Common myeloid progenitor, CD34-positive (primary cell): ENCODE measurements at regions of chr1 and their contacts with region 1.

Region 1: GRCh38 chr1:32992489-32993323 is 28.1 kb upstream of the RNF19B start:
- DNase-seq: peak; percentile 96 to 99 (median 99)
- H3K4me3 ChIP-seq: peak overlapping the region in 2 of 7 experiments; percentile 24 to 41
- H3K27ac ChIP-seq: peak overlapping the region; percentile 4 to 41
- H3K4me1 ChIP-seq: peaks cover 27 to 79% (median 57%) of the 10 kb centered on the region in 4 experiments
- H3K27me3 ChIP-seq: no peaks in the 10 kb centered on the region

Region 2: GRCh38 chr1:32964461-32965250 is 28.1 kb before region 1 on chr1 and contains the start of gene RNF19B:
- CTCF ChIA-PET with region 1: interaction called, 4 read pairs
- POLR2A ChIA-PET with region 1: interaction called, 28 read pairs
- DNase-seq: peak; percentile 94 to 97 (median 96)
- H3K4me3 ChIP-seq: peak within 1 kb of the TSS; percentile 59 to 89 (median 79)
- H3K27ac ChIP-seq: peak within 1 kb of the TSS in 1 of 2 experiments; percentile 73
- H3K4me1 ChIP-seq: peaks cover 7 to 30% (median 24%) of the 10 kb centered on the region in 4 experiments
- H3K27me3 ChIP-seq: no peaks in the 10 kb centered on the region

Region 3: DNA sequence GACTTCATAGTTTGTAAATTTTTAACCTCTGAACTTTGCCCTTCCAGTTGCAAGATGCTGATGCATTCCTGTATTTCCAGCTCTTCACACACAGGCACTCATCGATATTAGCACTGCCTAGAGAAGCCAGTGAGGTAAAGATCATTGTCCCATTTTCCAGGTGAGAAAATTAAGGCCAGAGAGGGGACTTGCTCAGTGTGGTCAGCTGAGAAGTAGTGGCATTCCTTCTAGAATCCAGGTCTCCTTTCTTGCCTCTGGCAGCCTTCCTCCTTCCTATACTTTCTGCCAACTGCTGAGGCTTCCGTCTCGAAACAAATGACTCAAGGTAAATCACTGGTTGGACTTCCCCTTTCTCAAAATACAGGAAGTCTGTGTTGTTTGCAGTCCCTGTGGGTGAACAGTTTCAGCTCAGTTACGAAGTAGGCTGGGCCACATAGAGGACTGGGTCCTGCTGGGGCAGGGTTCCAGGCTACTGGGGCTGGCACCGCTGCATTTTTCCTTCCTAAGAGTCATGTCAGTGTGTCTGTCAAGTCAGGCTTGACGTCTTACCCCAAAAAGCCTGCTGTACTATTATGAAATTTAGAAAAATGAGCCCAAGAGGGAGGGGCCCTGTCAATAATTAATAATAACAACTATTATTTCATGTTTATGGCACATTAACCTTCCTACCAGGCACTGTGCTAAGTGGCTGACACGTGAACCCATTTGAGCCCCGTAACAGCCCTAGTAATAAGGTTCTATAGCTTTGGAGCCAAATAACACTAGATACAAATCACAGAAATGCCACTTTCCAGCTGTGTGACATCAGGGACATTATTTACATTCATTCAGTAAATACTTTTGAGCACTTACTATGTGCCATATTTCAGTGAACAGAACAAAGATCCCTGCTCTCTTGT is 11.5 kb before region 1 on chr1:
- CTCF ChIA-PET with region 1: interaction called, 15 read pairs
- POLR2A ChIA-PET with region 1: interaction called, 14 read pairs
- DNase-seq: peak; percentile 84 to 96 (median 93)
- H3K4me3 ChIP-seq: peak overlapping the region in 6 of 7 experiments; percentile 8 to 55 (median 43)
- H3K27ac ChIP-seq: peak overlapping the region; percentile 40 to 84
- H3K4me1 ChIP-seq: peaks cover 17 to 52% (median 27%) of the 10 kb centered on the region in 4 experiments
- H3K27me3 ChIP-seq: no peaks in the 10 kb centered on the region

Region 4: GRCh38 chr1:33007190-33008050 is 14.7 kb after region 1 on chr1:
- CTCF ChIA-PET with region 1: interaction called, 12 read pairs
- POLR2A ChIA-PET with region 1: no interaction called
- DNase-seq: peak; percentile 48 to 70 (median 60)
- H3K4me3 ChIP-seq: no peak overlapping the region
- H3K27ac ChIP-seq: no peak overlapping the region
- H3K4me1 ChIP-seq: no peaks in the 10 kb centered on the region
- H3K27me3 ChIP-seq: no peaks in the 10 kb centered on the region